ENCODE measurements at regions of chr12 and their contacts with region 1.

Region 1: DNA sequence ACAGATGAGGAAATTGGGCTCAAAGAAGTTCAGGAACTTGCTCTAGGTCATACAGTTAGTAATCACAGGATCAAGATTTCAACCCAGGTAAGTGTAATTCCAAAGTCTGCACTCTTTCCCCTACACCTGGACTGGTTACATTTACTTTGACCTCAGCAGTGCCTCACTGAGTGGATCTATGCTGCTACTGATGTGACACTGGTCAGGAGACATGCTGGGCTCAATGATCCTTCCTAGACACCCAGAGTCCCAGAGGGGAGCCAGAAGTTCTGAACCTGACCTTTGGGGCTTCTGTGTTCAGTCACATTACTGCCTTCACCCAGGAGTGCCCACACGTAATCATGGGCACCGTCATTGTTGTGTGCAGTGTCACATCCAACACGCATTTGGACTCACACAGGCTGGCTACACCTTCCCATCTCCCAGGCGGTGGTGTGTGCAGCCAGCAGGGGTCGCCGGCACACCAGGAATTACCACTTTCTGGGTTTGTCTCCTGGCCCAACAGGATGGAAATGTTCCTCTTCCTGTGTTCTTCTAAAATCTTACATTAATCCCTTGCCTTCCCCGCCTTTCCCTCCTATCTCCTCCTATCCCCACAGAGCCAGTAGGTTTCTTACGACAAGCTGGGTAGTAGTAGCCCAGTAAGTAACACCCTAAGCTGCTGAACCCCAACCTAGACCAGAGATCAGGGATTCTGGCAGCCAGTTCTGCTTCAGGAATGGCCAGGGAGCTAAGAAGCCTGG is 25.6 kb downstream of the CALCOCO1 start:
- DNase-seq: peak; percentile 77
- CTCF ChIP-seq: peak; percentile 94

Region 2: GRCh38 chr12:53746592-53747092 is 45.0 kb after region 1 on chr12:
- in situ Hi-C with region 1: loop called (anchors 5 kb)
- DNase-seq: peak; percentile 87
- CTCF ChIP-seq: peak; percentile 100

Region 3: DNA sequence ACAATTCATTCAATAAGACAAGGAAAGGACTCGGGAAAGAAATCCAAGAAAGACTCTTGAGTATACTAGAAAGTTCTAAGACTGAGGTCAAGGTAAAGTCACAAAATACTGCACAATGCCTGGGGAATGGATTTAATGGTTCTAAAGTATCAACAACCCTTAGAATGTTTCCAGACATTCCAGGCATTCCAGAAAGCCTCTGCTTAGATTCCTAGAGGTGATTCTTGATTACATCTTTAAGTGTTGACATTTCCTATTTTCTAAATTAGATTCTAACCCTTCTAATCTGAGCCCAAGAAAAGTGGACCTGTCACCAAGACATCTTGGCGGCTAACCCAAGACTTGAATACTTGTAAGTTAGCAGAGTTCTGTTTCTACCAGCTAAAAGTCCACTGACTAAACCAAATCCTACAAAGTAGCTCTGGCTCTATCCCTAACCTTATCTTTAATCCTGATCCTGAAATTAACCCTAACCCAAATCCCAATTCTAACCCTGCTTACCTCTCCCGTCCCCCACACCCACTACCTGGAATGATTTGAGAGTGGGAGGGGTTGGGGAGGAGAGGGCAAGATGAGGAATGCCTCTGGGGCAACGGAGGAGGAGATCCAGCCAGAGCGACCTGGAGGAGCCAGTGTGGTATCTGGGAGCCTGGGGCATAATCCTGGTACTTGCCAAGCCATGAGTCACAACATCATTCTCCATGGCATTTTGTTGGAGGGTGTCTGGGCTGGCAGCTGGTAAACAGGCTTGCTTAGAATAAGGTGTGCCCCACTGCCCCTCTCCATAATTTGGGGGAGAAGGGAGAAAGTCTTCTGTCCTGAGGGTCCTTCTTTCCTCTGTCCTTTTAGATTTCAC is 143.5 kb after region 1 on chr12:
- in situ Hi-C with region 1: no loop called
- DNase-seq: no peak
- CTCF ChIP-seq: no peak